K562 (cell line): ENCODE measurements at regions of chr10 and their contacts with region 1.

Region 1: DNA sequence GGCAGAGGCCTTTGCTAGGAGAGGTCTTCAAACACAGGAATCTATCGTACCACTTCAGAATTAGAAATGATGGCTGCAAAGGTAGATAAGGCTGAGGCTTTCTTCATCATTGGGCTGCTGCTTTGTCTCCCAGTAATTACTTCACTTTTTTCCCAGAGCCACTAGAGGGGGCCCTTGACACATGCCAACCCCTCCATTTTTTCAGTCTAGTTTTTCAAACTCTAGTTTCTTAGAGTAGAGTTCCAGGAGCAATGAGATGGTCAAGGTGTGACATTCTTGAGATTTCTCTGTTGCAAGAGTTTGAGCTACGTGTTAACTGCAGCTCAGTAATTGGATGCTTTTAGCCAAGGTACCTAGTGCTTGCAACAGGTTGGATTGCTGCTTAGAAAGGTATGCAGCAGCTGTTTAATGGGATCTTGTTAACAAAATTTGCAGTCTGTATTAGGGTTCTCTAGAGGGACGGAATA is 33.8 kb upstream of the RBM20 start:
- DNase-seq: peak; percentile 65 to 84 (median 69)
- ATAC-seq: peak; percentile 83
- H3K4me3 ChIP-seq: no peak overlapping the region
- H3K27ac ChIP-seq: no peak overlapping the region; the same call in 2 of the 3 replicates
- H3K4me1 ChIP-seq: peaks cover 11 to 16% of the 10 kb centered on the region in 2 experiments; a peak in 3 of 5 replicates
- H3K27me3 ChIP-seq: no peaks in the 10 kb centered on the region
- CTCF ChIP-seq: peak; percentile 71 to 91 (median 84)
- EP300 ChIP-seq: peak; percentile 56
- POLR2A ChIP-seq: no peak
- RAD21 ChIP-seq: peak; percentile 75 to 83

Region 2: GRCh38 chr10:110036640-110037039 is 573.7 kb before region 1 on chr10:
- CTCF ChIA-PET with region 1: no interaction called
- POLR2A ChIA-PET with region 1: no interaction called
- in situ Hi-C with region 1: no loop called
- intact Hi-C with region 1: no loop called
- DNase-seq: no peak
- ATAC-seq: no peak
- H3K4me3 ChIP-seq: no peak overlapping the region
- H3K27ac ChIP-seq: no peak overlapping the region
- H3K4me1 ChIP-seq: peaks cover 0 to 2% of the 10 kb centered on the region in 2 experiments; a peak in 1 of 5 replicates
- H3K27me3 ChIP-seq: no peaks in the 10 kb centered on the region
- CTCF ChIP-seq: no peak
- EP300 ChIP-seq: no peak
- POLR2A ChIP-seq: no peak
- RAD21 ChIP-seq: no peak

Region 3: GRCh38 chr10:110192552-110192951 is 417.8 kb before region 1 on chr10:
- CTCF ChIA-PET with region 1: no interaction called
- POLR2A ChIA-PET with region 1: no interaction called
- in situ Hi-C with region 1: no loop called
- intact Hi-C with region 1: no loop called
- DNase-seq: peak; percentile 59 to 76 (median 64)
- ATAC-seq: peak; percentile 99
- H3K4me3 ChIP-seq: no peak overlapping the region
- H3K27ac ChIP-seq: no peak overlapping the region
- H3K4me1 ChIP-seq: no peaks in the 10 kb centered on the region
- H3K27me3 ChIP-seq: no peaks in the 10 kb centered on the region
- CTCF ChIP-seq: peak; percentile 59 to 89 (median 72)
- EP300 ChIP-seq: no peak
- POLR2A ChIP-seq: no peak
- RAD21 ChIP-seq: peak in 1 of 2 experiments; percentile 29; a peak in 1 of 4 replicates

Region 4: DNA sequence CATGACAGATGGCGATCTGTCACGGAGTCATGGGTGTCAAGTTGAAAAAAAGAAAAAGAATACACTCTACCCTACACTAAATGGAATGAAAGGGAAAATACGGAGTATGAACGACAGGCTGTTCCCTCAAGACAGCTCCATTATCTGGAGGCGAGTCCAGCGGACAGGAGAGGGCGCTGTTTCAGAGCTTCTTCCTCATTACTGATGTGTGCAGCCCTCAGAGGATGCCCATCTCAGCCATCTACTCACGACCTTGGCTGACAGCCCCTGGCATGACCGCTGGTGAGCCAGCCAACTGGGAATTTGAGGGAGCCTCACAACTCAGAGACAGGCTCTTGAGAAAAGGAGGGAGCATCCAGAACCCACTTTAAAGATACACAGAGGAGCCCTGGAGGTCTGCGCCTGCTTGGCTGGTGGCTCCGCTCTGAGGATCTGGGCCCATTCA is 256.0 kb before region 1 on chr10:
- CTCF ChIA-PET with region 1: no interaction called
- POLR2A ChIA-PET with region 1: no interaction called
- in situ Hi-C with region 1: no loop called
- intact Hi-C with region 1: no loop called
- DNase-seq: peak; percentile 49 to 75 (median 56)
- ATAC-seq: peak; percentile 94
- H3K4me3 ChIP-seq: no peak overlapping the region
- H3K27ac ChIP-seq: no peak overlapping the region
- H3K4me1 ChIP-seq: peaks cover 0 to 8% of the 10 kb centered on the region in 2 experiments; a peak in 3 of 5 replicates
- H3K27me3 ChIP-seq: peaks cover 0 to 45% of the 10 kb centered on the region in 2 experiments; a peak in 4 of 5 replicates
- CTCF ChIP-seq: peak; percentile 74 to 83 (median 81)
- EP300 ChIP-seq: no peak
- POLR2A ChIP-seq: no peak
- RAD21 ChIP-seq: peak; percentile 49 to 83

Region 5: GRCh38 chr10:110648692-110649346 is 38.5 kb after region 1 on chr10:
- CTCF ChIA-PET with region 1: no interaction called
- POLR2A ChIA-PET with region 1: interaction called, 5 read pairs
- in situ Hi-C with region 1: no loop called
- intact Hi-C with region 1: loop called (anchors 1 kb)
- DNase-seq: no peak
- ATAC-seq: no peak
- H3K4me3 ChIP-seq: no peak overlapping the region
- H3K27ac ChIP-seq: no peak overlapping the region
- H3K4me1 ChIP-seq: peaks cover 13 to 24% of the 10 kb centered on the region in 2 experiments
- H3K27me3 ChIP-seq: no peaks in the 10 kb centered on the region
- CTCF ChIP-seq: no peak
- EP300 ChIP-seq: no peak
- POLR2A ChIP-seq: no peak
- RAD21 ChIP-seq: no peak

Region 6: GRCh38 chr10:110681023-110681681 is 70.8 kb after region 1 on chr10:
- CTCF ChIA-PET with region 1: interaction called, 14 read pairs
- POLR2A ChIA-PET with region 1: no interaction called
- in situ Hi-C with region 1: loop called (anchors 10 kb)
- intact Hi-C with region 1: loop called (anchors 1 kb)
- DNase-seq: peak; percentile 27 to 65 (median 52)
- ATAC-seq: peak; percentile 96
- H3K4me3 ChIP-seq: no peak overlapping the region
- H3K27ac ChIP-seq: no peak overlapping the region
- H3K4me1 ChIP-seq: peaks cover 0 to 11% of the 10 kb centered on the region in 2 experiments; a peak in 3 of 5 replicates
- H3K27me3 ChIP-seq: no peaks in the 10 kb centered on the region
- CTCF ChIP-seq: peak; percentile 64 to 76 (median 67)
- EP300 ChIP-seq: no peak
- POLR2A ChIP-seq: no peak
- RAD21 ChIP-seq: peak; percentile 51 to 68

Region 7: GRCh38 chr10:110746254-110746826 is 136.0 kb after region 1 on chr10:
- CTCF ChIA-PET with region 1: no interaction called
- POLR2A ChIA-PET with region 1: no interaction called
- in situ Hi-C with region 1: no loop called
- intact Hi-C with region 1: loop called (anchors 1 kb)
- DNase-seq: peak; percentile 45 to 58 (median 48)
- ATAC-seq: peak; percentile 87
- H3K4me3 ChIP-seq: no peak overlapping the region
- H3K27ac ChIP-seq: no peak overlapping the region
- H3K4me1 ChIP-seq: peaks cover 0 to 3% of the 10 kb centered on the region in 2 experiments; a peak in 2 of 5 replicates
- H3K27me3 ChIP-seq: no peaks in the 10 kb centered on the region
- CTCF ChIP-seq: peak; percentile 65 to 68 (median 66)
- EP300 ChIP-seq: no peak
- POLR2A ChIP-seq: no peak
- RAD21 ChIP-seq: peak; percentile 87 to 88

Region 8: GRCh38 chr10:110811791-110812574 is 201.6 kb after region 1 on chr10:
- CTCF ChIA-PET with region 1: no interaction called
- POLR2A ChIA-PET with region 1: no interaction called
- in situ Hi-C with region 1: no loop called
- intact Hi-C with region 1: no loop called
- DNase-seq: no peak
- ATAC-seq: no peak
- H3K4me3 ChIP-seq: no peak overlapping the region
- H3K27ac ChIP-seq: no peak overlapping the region
- H3K4me1 ChIP-seq: peaks cover 0 to 4% of the 10 kb centered on the region in 2 experiments; a peak in 1 of 5 replicates
- H3K27me3 ChIP-seq: no peaks in the 10 kb centered on the region
- CTCF ChIP-seq: no peak
- EP300 ChIP-seq: no peak
- POLR2A ChIP-seq: no peak
- RAD21 ChIP-seq: no peak

Region 9: DNA sequence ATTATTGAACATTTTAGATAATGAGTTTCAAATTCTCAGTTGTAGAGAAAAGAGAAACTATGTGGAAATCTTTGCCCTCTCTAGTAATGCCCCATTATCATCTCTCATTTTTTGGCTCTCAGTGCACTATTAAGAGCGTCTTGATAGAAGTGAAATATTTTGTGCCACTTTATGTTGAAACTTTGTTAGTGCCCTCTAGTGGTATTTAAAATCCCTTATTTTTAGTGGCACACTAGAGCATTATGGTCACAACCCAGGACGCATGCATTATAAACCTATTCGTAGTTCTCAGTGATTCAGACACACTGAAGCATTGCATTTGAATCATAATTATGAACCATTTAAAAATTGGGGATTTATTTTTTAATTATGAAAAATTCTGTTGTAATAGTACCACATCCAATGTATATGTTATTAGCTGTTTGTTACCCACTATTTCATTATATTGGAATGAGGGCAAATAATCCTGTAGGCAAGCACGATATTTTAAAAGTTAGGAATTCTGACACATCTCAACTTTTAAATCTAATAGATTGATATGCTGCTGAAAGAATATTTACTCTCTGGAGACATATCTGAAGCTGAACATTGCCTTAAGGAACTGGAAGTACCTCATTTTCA is 283.3 kb after region 1 on chr10:
- CTCF ChIA-PET with region 1: no interaction called
- POLR2A ChIA-PET with region 1: no interaction called
- in situ Hi-C with region 1: loop called (anchors 25 kb)
- intact Hi-C with region 1: no loop called
- DNase-seq: peak in 2 of 4 experiments; percentile 30 to 37
- ATAC-seq: peak; percentile 82
- H3K4me3 ChIP-seq: no peak overlapping the region
- H3K27ac ChIP-seq: no peak overlapping the region
- H3K4me1 ChIP-seq: no peaks in the 10 kb centered on the region
- H3K27me3 ChIP-seq: no peaks in the 10 kb centered on the region
- CTCF ChIP-seq: peak; percentile 30 to 49 (median 43); a peak in 4 of 6 replicates
- EP300 ChIP-seq: no peak
- POLR2A ChIP-seq: no peak
- RAD21 ChIP-seq: peak; percentile 51 to 65